T-cell (primary cell): ENCODE measurements at regions of chr1 and their contacts with region 1.

Region 1: GRCh38 chr1:150561974-150562445 is 12.8 kb downstream of the ADAMTSL4 start:
- DNase-seq: peak in 34 of 35 experiments; percentile 66 to 91 (median 83)
- ATAC-seq: peak; percentile 46 to 55 (median 52)
- H3K4me3 ChIP-seq: peak overlapping the region; percentile 83 to 90
- H3K4me3 Mint-ChIP-seq: peak overlapping the region; percentile 91 to 99 (median 95)
- H3K27ac ChIP-seq: peak overlapping the region; percentile 95
- H3K27ac Mint-ChIP-seq: peak overlapping the region; percentile 100
- H3K4me1 ChIP-seq: peaks cover 33 to 82% of the 10 kb centered on the region in 2 experiments
- H3K4me1 Mint-ChIP-seq: peaks cover 60 to 71% (median 61%) of the 10 kb centered on the region in 3 donors
- H3K27me3 ChIP-seq: no peaks in the 10 kb centered on the region
- H3K27me3 Mint-ChIP-seq: no peaks in the 10 kb centered on the region

Region 2: GRCh38 chr1:150507905-150508854 is 53.8 kb before region 1 on chr1 and contains the start of gene ECM1:
- CTCF ChIA-PET with region 1: no interaction called
- POLR2A ChIA-PET with region 1: interaction called in 1 of 2 experiments, 10 read pairs
- DNase-seq: no peak
- ATAC-seq: no peak
- H3K4me3 ChIP-seq: no peak within 1 kb of the TSS
- H3K4me3 Mint-ChIP-seq: no peak within 1 kb of the TSS
- H3K27ac ChIP-seq: no peak within 1 kb of the TSS
- H3K27ac Mint-ChIP-seq: peak within 1 kb of the TSS; percentile 23 to 34
- H3K4me1 ChIP-seq: no peaks in the 10 kb centered on the region
- H3K4me1 Mint-ChIP-seq: peaks cover 0 to 7% (median 0%) of the 10 kb centered on the region in 3 donors
- H3K27me3 ChIP-seq: no peaks in the 10 kb centered on the region
- H3K27me3 Mint-ChIP-seq: no peaks in the 10 kb centered on the region
- total RNA-seq, gene ECM1: 0.25 to 2.9 (median 1.2) TPM

Region 3: DNA sequence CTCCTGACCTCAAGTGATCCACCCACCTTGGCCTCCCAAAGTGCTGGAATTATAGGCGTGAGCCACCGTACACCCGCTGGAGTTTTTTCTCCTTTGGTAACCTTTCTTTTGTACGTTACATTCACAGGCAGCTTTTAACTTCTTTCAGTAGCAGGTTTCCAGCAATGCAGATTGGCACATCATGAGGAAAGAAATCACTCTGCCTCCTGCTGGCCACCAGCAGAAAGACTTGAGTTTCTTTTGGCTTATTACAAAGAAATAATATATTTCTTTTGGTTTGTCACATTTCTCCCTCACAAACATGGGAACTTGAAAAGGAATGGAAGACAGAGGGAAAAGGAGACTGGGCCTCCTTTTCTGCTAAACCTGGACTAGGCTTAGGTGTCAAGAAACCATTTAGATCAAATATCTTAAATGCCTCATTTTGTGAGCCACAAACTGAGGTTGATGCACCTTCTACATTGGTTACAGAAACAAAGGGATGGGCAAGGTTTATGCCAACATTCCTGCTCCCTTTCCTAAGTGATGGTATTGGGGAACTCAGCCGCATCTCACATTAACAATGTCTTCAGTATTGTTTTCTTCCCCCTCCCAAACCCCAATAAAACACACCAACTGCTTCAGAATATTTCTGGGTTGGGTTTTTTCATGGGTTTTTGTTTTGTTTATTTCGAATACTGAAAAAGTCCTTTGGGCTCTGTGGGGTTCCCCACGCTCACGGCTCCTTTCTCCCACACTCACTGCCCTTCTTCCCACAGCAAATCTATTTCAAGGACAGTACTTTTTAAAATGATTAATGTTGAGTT is 59.7 kb after region 1 on chr1:
- CTCF ChIA-PET with region 1: interaction called, 12 to 106 read pairs
- POLR2A ChIA-PET with region 1: interaction called, 10 read pairs
- DNase-seq: peak; percentile 22 to 84 (median 60)
- ATAC-seq: peak; percentile 73 to 84 (median 78)
- H3K4me3 ChIP-seq: no peak overlapping the region
- H3K4me3 Mint-ChIP-seq: peak overlapping the region in 2 of 3 donors; percentile 17 to 34
- H3K27ac ChIP-seq: peak overlapping the region; percentile 40
- H3K27ac Mint-ChIP-seq: peak overlapping the region; percentile 86 to 92
- H3K4me1 ChIP-seq: peaks cover 10 to 21% of the 10 kb centered on the region in 2 experiments
- H3K4me1 Mint-ChIP-seq: peaks cover 33 to 59% (median 59%) of the 10 kb centered on the region in 3 donors
- H3K27me3 ChIP-seq: no peaks in the 10 kb centered on the region
- H3K27me3 Mint-ChIP-seq: no peaks in the 10 kb centered on the region

Region 4: DNA sequence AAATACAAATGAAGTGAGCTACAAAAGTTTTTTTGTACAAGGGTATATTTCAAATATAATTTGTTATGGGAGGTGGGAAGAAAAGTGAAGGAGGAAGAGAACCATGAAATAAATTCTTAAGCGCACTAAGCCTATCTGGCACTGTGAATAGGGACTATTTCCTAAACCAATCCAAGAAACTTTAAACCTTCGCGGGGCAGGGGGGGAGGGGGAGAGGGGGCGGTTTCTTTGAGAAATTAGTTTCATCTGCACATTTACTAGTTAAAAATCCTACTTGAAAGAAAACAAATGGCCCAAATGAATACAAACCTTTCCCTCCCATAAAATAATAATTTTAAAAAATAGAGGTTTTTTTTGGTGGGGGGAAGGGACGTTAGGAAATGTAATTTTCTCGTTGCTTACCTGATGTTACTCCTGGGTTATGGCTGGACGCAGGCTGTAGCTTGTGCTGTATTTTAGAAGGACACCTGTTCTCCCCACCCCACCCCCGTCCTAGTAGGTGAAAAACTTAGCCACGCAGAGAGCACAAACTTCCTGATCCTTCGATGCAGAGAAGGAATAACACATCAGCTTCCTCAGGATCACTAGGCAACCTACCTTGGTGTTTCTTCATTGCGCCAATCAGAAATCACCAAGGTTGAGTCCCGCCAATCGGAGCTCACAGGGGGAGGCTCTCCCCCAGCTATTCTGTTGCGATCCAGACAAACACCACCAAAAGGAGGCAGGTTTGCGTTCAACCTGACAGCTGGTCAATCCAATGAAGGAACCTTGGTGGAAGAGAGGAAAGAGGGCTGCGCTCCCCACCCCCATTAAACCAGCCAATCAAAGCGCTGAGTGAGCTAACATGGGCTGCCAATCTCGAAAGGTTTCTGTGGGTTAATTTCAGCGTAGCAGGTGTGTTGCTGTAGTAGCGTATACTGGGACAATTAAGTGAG is 134.8 kb after region 1 on chr1 and contains the start of gene GOLPH3L:
- CTCF ChIA-PET with region 1: interaction called in 1 of 2 experiments, 16 read pairs
- POLR2A ChIA-PET with region 1: interaction called in 1 of 2 experiments, 3 read pairs
- DNase-seq: peak; percentile 71 to 95 (median 90)
- ATAC-seq: peak; percentile 99 to 100 (median 100)
- H3K4me3 ChIP-seq: peak within 1 kb of the TSS; percentile 93 to 96
- H3K4me3 Mint-ChIP-seq: peak within 1 kb of the TSS; percentile 94 to 99 (median 97)
- H3K27ac ChIP-seq: peak within 1 kb of the TSS; percentile 77
- H3K27ac Mint-ChIP-seq: peak within 1 kb of the TSS; percentile 94 to 95
- H3K4me1 ChIP-seq: peaks cover 4 to 13% of the 10 kb centered on the region in 2 experiments
- H3K4me1 Mint-ChIP-seq: peaks cover 29 to 36% (median 31%) of the 10 kb centered on the region in 3 donors
- H3K27me3 ChIP-seq: no peaks in the 10 kb centered on the region
- H3K27me3 Mint-ChIP-seq: no peaks in the 10 kb centered on the region
- total RNA-seq, gene GOLPH3L: 10.2 to 23.7 (median 21.5) TPM

Region 5: DNA sequence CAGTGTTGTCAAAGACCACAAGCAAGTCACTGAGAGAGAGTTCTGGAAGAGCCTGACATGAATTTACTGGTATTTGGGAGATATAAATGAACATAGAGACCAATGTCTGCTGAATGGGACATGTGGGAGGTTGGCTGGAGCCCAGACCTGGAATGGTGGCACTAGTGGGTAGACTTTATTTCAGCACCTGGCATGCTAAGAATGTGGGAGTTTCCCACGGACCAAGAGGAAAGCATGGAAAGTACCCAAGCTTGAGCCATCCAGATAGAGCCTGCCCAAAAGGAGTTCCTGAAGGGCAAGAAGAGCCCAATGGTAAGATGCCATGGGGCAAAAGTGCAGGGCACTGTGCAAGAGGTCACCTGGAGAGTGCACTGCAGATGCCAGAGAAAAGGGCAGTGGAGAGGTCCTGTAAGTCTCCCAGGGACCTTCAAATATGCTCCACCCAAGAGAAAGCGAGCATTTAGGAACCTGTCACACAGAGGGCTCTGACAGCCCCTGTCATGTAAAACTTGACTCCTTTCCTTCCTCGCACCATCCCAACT is 712.0 kb after region 1 on chr1:
- CTCF ChIA-PET with region 1: no interaction called
- POLR2A ChIA-PET with region 1: no interaction called
- DNase-seq: no peak
- ATAC-seq: no peak
- H3K4me3 ChIP-seq: no peak overlapping the region
- H3K4me3 Mint-ChIP-seq: no peak overlapping the region
- H3K27ac ChIP-seq: no peak overlapping the region
- H3K27ac Mint-ChIP-seq: no peak overlapping the region
- H3K4me1 ChIP-seq: no peaks in the 10 kb centered on the region
- H3K4me1 Mint-ChIP-seq: peaks cover 0 to 12% (median 0%) of the 10 kb centered on the region in 3 donors
- H3K27me3 ChIP-seq: no peaks in the 10 kb centered on the region
- H3K27me3 Mint-ChIP-seq: no peaks in the 10 kb centered on the region